Activated T-helper 2 cell treated with anti-CD3 and anti-CD28 coated beads, Interferon-gamma antibody, Interleukin-2, Interleukin-4, amounts not matched to agents 10 μg/mL and 5 μg/mL and 100 μg/mL, durations not matched to agents 14 hours and 24 hours and 36 hours (primary cell): ENCODE measurements at regions of chr12 and their contacts with region 1.

Region 1: DNA sequence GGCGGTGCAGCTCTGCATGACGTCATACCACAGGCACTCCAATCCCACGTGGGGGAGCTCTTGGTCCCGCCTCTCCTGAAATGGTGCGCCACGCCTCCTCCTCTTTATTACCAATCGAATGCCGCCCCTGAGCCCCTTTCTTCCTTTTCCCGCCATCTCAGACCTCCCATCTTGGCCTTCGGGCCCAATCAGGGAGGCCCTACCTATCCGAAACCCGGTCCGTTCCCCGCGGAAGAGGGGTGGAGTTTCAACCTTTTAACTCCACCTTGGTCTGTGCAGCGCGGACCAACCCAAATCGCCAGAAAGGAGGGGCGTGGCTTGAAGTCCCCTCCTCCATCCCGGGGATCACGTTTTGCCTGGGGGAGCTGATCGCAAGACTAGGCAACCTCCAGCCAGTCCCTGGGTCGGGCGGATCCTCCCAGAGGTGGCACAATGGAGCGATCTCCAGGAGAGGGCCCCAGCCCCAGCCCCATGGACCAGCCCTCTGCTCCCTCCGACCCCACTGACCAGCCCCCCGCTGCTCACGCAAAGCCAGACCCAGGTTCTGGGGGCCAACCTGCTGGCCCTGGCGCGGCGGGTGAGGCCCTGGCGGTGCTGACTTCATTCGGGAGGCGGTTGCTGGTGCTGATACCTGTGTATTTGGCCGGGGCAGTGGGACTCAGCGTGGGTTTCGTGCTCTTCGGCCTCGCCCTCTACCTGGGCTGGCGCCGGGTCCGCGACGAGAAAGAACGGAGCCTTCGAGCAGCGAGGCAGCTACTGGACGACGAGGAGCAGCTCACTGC is at the start of gene ESYT1:
- DNase-seq: peak; percentile 99
- H3K4me3 Mint-ChIP-seq: peak within 1 kb of the TSS; percentile 98
- H3K27ac Mint-ChIP-seq: peak within 1 kb of the TSS; percentile 91
- H3K4me1 Mint-ChIP-seq: peaks cover 52% of the 10 kb centered on the region
- H3K27me3 Mint-ChIP-seq: no peaks in the 10 kb centered on the region
- total RNA-seq, gene ESYT1: 154 TPM in 2 replicates

Region 2: DNA sequence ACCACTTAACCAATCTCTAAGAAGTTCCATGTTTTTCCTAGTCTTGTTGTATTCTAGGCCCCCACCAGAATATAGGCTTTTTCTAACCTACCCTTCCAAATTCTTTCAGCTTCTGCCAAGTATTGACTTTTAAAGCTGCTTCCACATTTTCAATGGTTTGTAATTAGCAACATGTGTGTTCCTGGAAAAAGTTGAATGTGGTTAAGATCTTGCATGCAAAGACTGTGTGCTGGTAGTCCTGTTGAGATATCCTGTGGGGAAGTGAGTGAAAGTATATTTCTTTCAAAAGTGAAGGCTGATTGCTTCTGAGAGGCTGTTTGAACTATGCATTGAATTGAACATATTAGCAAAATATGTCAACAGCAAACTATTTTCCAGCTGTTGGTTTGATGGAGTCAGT is 579.3 kb before region 1 on chr12:
- intact Hi-C with region 1: no loop called
- DNase-seq: no peak
- H3K4me3 Mint-ChIP-seq: no peak overlapping the region
- H3K27ac Mint-ChIP-seq: no peak overlapping the region
- H3K4me1 Mint-ChIP-seq: peaks cover 8% of the 10 kb centered on the region
- H3K27me3 Mint-ChIP-seq: peaks cover 3% of the 10 kb centered on the region

Region 3: GRCh38 chr12:56152318-56153033 is 24.4 kb after region 1 on chr12 and contains the start of gene MYL6B:
- intact Hi-C with region 1: loop called (anchors 1 kb)
- DNase-seq: peak; percentile 93
- H3K4me3 Mint-ChIP-seq: peak within 1 kb of the TSS; percentile 95
- H3K27ac Mint-ChIP-seq: peak within 1 kb of the TSS; percentile 98
- H3K4me1 Mint-ChIP-seq: peaks cover 43% of the 10 kb centered on the region
- H3K27me3 Mint-ChIP-seq: no peaks in the 10 kb centered on the region
- total RNA-seq, gene MYL6B: 89.7 and 94.3 TPM in 2 replicates

Region 4: GRCh38 chr12:56158029-56158925 is 30.2 kb after region 1 on chr12 and contains the start of gene MYL6:
- intact Hi-C with region 1: loop called (anchors 1 kb)
- DNase-seq: peak; percentile 92
- H3K4me3 Mint-ChIP-seq: peak within 1 kb of the TSS; percentile 97
- H3K27ac Mint-ChIP-seq: peak within 1 kb of the TSS; percentile 91
- H3K4me1 Mint-ChIP-seq: peaks cover 54% of the 10 kb centered on the region
- H3K27me3 Mint-ChIP-seq: no peaks in the 10 kb centered on the region
- total RNA-seq, gene MYL6: 1,051 and 1,067 TPM in 2 replicates

Region 5: GRCh38 chr12:56636675-56637540 is 508.8 kb after region 1 on chr12:
- intact Hi-C with region 1: loop called (anchors 5 kb)
- DNase-seq: peak; percentile 87
- H3K4me3 Mint-ChIP-seq: peak overlapping the region; percentile 97
- H3K27ac Mint-ChIP-seq: peak overlapping the region; percentile 93
- H3K4me1 Mint-ChIP-seq: peaks cover 47% of the 10 kb centered on the region
- H3K27me3 Mint-ChIP-seq: no peaks in the 10 kb centered on the region